ENCODE measurements at regions of chr1 and their contacts with region 1.

Region 1: GRCh38 chr1:22861764-22862440 is 110.8 kb downstream of the LACTBL1 start:
- DNase-seq: peak in 1 of 2 experiments; percentile 78
- H3K4me3 ChIP-seq: no peak overlapping the region
- H3K27ac ChIP-seq: no peak overlapping the region
- H3K4me1 ChIP-seq: peaks cover 0 to 3% (median 0%) of the 10 kb centered on the region in 4 experiments; a peak in 3 of 7 replicates
- H3K27me3 ChIP-seq: no peaks in the 10 kb centered on the region; a peak in 1 of 7 replicates
- CTCF ChIP-seq: peak; percentile 71 to 80 (median 80)
- EP300 ChIP-seq: no peak
- POLR2A ChIP-seq: no peak
- RAD21 ChIP-seq: peak; percentile 79 to 88

Region 2: GRCh38 chr1:22709891-22710700 is 151.8 kb before region 1 on chr1:
- CTCF ChIA-PET with region 1: interaction called, 78 read pairs
- POLR2A ChIA-PET with region 1: no interaction called
- DNase-seq: peak in 1 of 2 experiments; percentile 79
- H3K4me3 ChIP-seq: peak overlapping the region; percentile 19 to 64 (median 38)
- H3K27ac ChIP-seq: no peak overlapping the region
- H3K4me1 ChIP-seq: peaks cover 0 to 6% (median 2%) of the 10 kb centered on the region in 4 experiments; a peak in 4 of 7 replicates
- H3K27me3 ChIP-seq: peaks cover 7 to 24% (median 15%) of the 10 kb centered on the region in 4 experiments
- CTCF ChIP-seq: no peak
- EP300 ChIP-seq: peak in 1 of 2 experiments; percentile 47; a peak in 1 of 3 replicates
- POLR2A ChIP-seq: no peak
- RAD21 ChIP-seq: no peak

Region 3: DNA sequence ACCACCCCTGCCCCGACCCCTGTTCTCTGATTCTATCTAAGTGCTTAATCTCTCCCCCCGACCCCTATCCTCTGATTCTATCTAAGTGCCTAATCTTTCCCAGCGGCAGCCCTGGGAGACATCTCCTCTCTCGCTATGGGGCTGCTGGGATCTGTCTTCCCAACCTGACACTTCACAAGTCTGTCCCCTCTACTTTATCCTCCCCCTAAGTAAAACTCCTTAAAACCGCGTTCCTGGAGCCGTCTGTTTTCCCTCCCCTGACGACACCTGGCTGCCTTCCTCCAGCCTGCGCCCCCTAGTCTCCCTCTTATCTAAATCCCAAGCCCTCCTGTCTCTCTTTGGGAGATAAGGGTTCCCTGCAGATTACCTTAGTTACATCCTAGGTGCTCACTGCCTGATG is 120.8 kb before region 1 on chr1:
- CTCF ChIA-PET with region 1: interaction called, 46 read pairs
- POLR2A ChIA-PET with region 1: no interaction called
- DNase-seq: no peak
- H3K4me3 ChIP-seq: no peak overlapping the region
- H3K27ac ChIP-seq: no peak overlapping the region
- H3K4me1 ChIP-seq: peaks cover 0 to 7% (median 0%) of the 10 kb centered on the region in 4 experiments; a peak in 4 of 7 replicates
- H3K27me3 ChIP-seq: no peaks in the 10 kb centered on the region
- CTCF ChIP-seq: no peak
- EP300 ChIP-seq: no peak
- POLR2A ChIP-seq: no peak
- RAD21 ChIP-seq: no peak

Region 4: DNA sequence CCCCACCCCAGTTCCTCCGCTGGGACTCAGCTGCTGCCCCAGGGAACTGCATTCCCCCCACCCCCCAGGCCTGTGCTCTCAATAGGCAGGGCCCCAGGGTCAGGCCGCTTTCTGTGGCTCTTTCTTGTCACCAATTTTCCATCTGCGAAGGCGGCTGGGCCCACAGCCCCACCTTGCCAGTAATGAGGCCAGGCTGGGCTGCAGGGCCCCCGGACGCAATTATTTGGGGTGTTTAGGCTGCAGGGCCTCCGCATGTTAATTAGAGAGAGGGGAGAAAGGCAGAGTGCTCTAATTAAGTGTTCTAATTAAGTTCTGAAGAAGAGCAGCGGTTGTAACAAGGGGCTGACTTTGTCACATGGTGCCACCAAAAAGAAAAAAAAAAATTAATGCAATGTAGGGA is 79.5 kb before region 1 on chr1:
- CTCF ChIA-PET with region 1: interaction called, 17 read pairs
- POLR2A ChIA-PET with region 1: no interaction called
- DNase-seq: no peak
- H3K4me3 ChIP-seq: no peak overlapping the region
- H3K27ac ChIP-seq: no peak overlapping the region
- H3K4me1 ChIP-seq: peaks cover 0 to 10% (median 4%) of the 10 kb centered on the region in 4 experiments; a peak in 3 of 7 replicates
- H3K27me3 ChIP-seq: no peaks in the 10 kb centered on the region
- CTCF ChIP-seq: no peak
- EP300 ChIP-seq: no peak
- POLR2A ChIP-seq: no peak
- RAD21 ChIP-seq: no peak

Region 5: DNA sequence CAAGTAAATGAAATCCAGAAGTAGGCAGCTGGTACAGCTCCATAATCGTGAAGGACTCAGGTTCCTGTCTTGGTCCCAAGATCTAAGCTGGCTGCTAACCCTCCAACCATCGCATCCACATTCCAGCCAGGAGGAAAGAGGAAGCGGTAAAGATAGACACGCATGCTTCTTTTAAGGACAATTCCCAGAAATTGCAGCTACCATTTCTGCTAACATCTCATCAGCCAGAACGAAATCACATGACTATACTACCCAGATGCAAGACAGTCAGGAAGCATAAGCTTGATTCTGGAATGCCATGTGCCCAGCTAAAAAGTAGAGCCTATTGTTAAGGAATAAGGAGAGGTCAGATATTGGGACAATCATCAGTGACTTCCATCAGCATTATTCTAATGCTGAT is 40.9 kb before region 1 on chr1:
- CTCF ChIA-PET with region 1: interaction called, 16 read pairs
- POLR2A ChIA-PET with region 1: no interaction called
- DNase-seq: no peak
- H3K4me3 ChIP-seq: no peak overlapping the region
- H3K27ac ChIP-seq: no peak overlapping the region
- H3K4me1 ChIP-seq: peaks cover 0 to 5% (median 1%) of the 10 kb centered on the region in 4 experiments; a peak in 4 of 7 replicates
- H3K27me3 ChIP-seq: no peaks in the 10 kb centered on the region
- CTCF ChIP-seq: no peak
- EP300 ChIP-seq: no peak
- POLR2A ChIP-seq: no peak
- RAD21 ChIP-seq: no peak

Region 6: GRCh38 chr1:22850681-22851080 is 11.2 kb before region 1 on chr1:
- CTCF ChIA-PET with region 1: interaction called, 132 read pairs
- POLR2A ChIA-PET with region 1: no interaction called
- DNase-seq: no peak
- H3K4me3 ChIP-seq: no peak overlapping the region
- H3K27ac ChIP-seq: no peak overlapping the region
- H3K4me1 ChIP-seq: peaks cover 6 to 15% (median 10%) of the 10 kb centered on the region in 4 experiments
- H3K27me3 ChIP-seq: no peaks in the 10 kb centered on the region
- CTCF ChIP-seq: no peak
- EP300 ChIP-seq: no peak
- POLR2A ChIP-seq: no peak
- RAD21 ChIP-seq: no peak

Region 7: DNA sequence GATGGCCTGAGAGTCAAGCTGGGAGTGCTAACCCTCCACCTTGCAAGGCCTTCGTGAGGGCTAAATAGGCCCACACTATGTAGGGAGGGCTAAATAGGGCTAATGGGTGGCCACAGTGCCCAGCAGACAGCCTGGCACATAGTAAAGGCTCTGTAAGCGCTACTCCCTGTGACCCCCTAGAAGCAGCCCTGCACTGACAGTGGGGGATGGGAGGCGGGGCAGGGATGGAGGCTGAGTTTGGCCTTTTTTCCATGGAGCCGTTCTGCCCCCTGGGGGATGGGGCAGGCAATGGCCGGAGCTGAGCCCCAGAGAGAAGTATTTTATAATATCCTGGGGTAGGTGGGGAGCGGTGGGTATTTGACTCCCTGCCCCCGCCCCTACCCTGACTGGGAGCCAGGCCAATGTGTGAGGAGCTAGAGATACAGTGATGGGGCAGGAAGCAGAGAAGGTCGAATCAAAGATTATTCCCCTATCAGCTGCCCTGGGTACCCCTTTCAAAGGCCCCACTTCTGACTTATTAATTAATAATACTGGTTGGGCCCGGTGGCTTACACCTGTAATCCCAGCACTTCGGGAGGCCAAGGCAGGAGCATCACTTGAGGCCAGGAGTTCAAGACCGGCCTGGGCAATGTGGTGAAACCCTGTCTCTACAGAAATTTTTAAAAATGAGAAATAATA is 68.5 kb after region 1 on chr1:
- CTCF ChIA-PET with region 1: interaction called, 19 read pairs
- POLR2A ChIA-PET with region 1: no interaction called
- DNase-seq: peak; percentile 44 to 95
- H3K4me3 ChIP-seq: no peak overlapping the region
- H3K27ac ChIP-seq: no peak overlapping the region
- H3K4me1 ChIP-seq: no peaks in the 10 kb centered on the region
- H3K27me3 ChIP-seq: no peaks in the 10 kb centered on the region; a peak in 1 of 7 replicates
- CTCF ChIP-seq: peak; percentile 81 to 93 (median 85)
- EP300 ChIP-seq: 0 out of 3 replicates have a peak, but pooled peaks of 1 of the 2 experiments have one; percentile 46
- POLR2A ChIP-seq: no peak
- RAD21 ChIP-seq: peak; percentile 94 to 98

Region 8: DNA sequence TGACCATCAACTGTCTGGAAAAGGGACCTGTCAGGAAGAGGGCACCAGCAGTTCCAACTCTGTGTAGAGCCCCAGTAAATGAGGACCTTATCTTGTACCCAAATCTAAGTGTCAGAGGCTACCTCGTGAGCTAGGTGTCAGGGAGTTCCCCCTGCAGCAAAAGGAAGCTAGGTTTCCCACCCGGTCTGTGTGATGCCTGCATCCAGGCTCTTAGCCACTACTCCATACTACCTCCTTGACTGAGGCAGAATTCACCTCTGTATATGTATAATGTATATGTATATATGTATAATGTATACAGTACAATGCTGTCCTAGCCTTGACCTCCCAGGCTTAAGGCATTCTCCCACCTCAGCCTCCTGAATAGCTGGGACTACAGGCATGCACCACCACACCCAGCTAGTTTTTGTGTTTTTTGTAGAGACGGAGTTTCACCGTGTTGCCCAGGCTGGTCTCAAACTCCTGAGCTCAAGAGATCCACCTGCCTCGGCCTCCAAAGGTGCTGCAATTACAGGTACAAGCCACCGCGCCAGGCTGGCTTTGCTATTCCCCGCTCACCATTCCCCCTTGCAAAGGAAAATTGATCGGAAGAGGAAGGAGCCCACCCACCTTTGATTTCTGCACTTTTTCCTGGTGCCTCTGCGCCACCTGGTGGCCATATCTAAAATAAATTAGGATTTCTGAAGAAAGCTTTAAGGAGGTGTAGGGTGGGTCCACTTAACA is 322.5 kb after region 1 on chr1:
- CTCF ChIA-PET with region 1: no interaction called
- POLR2A ChIA-PET with region 1: no interaction called
- DNase-seq: peak; percentile 57 to 69
- H3K4me3 ChIP-seq: no peak overlapping the region
- H3K27ac ChIP-seq: no peak overlapping the region
- H3K4me1 ChIP-seq: no peaks in the 10 kb centered on the region
- H3K27me3 ChIP-seq: peaks cover 0 to under 1% (median 0%) of the 10 kb centered on the region in 4 experiments; a peak in 1 of 7 replicates
- CTCF ChIP-seq: peak; percentile 36 to 86 (median 63)
- EP300 ChIP-seq: no peak
- POLR2A ChIP-seq: no peak
- RAD21 ChIP-seq: peak; percentile 93 to 94

Measured in H1 (cell line).